Testis (tissue), 5 donors: ENCODE measurements at regions of chr12 and their contacts with region 1.

Region 1: GRCh38 chr12:59149997-59150642 is 229.8 kb upstream of the LRIG3 start:
- DNase-seq: peak; percentile 36
- H3K4me3 ChIP-seq: no peak overlapping the region
- H3K27ac ChIP-seq: no peak overlapping the region
- H3K4me1 ChIP-seq: no peaks in the 10 kb centered on the region
- H3K27me3 ChIP-seq: no peaks in the 10 kb centered on the region
- CTCF ChIP-seq: peak; percentile 84 to 97 (median 94)
- POLR2A ChIP-seq: no peak

Region 2: DNA sequence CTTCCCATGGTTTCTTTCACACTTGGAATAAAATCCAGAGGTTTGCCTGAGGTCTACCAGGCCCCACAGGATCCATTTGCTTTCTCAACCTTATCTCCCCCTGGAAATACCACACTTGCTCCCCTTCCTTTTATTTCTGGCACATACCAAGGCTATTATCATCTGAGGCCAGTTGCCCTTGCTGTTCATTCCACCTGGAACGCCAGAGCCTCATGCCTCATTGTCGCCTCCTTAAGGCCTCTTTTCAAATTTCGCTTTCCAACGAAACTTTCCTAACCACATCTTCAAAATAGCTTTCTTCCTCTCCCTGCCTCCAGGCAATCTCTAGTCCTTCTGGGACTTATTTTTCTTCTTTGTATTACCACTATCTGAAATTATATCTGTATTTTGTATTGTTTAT is 218.6 kb before region 1 on chr12:
- intact Hi-C with region 1: no loop called
- DNase-seq: no peak
- H3K4me3 ChIP-seq: no peak overlapping the region
- H3K27ac ChIP-seq: no peak overlapping the region
- H3K4me1 ChIP-seq: no peaks in the 10 kb centered on the region
- H3K27me3 ChIP-seq: no peaks in the 10 kb centered on the region
- CTCF ChIP-seq: no peak
- POLR2A ChIP-seq: no peak

Region 3: GRCh38 chr12:59113831-59114615 is 36.1 kb before region 1 on chr12:
- intact Hi-C with region 1: loop called (anchors 5 kb)
- DNase-seq: peak; percentile 90
- H3K4me3 ChIP-seq: no peak overlapping the region
- H3K27ac ChIP-seq: no peak overlapping the region
- H3K4me1 ChIP-seq: no peaks in the 10 kb centered on the region
- H3K27me3 ChIP-seq: no peaks in the 10 kb centered on the region
- CTCF ChIP-seq: peak; percentile 48 to 79 (median 77)
- POLR2A ChIP-seq: no peak